ENCODE measurements at regions of chr2 and their contacts with region 1.

Region 1: DNA sequence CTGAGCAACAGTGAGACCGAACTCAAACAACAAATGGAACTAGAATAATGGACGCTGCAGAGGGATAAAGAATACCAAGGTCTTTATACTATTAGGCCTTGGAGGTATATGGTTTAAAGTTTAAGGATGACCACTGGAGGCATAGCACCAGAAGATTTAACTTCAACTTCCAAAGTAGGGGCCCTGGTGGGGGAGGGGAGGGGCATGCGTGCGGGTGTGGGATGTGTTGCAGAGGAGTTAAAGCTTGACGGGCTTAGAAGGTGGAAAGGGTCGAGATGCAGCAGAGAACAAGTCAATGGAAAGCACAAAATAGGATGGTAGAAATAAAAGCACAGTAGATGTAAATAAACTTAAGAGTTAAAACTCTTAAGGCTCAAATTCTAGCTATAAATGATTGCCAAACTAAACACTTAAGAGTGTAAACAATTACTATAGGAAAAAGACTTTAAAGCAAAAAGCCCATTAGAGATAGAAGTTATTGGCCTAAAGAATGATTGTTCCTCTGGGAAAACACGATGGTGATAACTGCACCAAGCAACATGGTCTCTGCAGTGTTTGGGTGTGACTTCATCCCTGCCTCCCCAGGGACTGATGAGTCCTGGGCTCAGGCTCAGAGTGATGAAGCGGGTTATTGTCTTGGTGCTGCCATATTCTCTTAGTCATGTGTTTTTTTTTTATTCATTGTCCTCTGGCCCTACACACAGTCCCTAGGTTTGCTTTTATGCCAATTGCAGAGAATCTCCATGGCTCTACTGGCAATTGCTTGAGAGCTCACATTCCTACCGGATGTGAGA is 13.0 kb downstream of the RRM2 start:
- DNase-seq: no peak
- H3K4me3 ChIP-seq: no peak overlapping the region
- H3K27ac ChIP-seq: no peak overlapping the region
- H3K4me1 ChIP-seq: no peaks in the 10 kb centered on the region
- H3K27me3 ChIP-seq: no peaks in the 10 kb centered on the region
- CTCF ChIP-seq: no peak
- EP300 ChIP-seq: no peak
- POLR2A ChIP-seq: no peak

Region 2: GRCh38 chr2:10239561-10239967 is 104.1 kb after region 1 on chr2:
- in situ Hi-C with region 1: no loop called
- intact Hi-C with region 1: no loop called
- DNase-seq: no peak
- H3K4me3 ChIP-seq: no peak overlapping the region
- H3K27ac ChIP-seq: no peak overlapping the region
- H3K4me1 ChIP-seq: no peaks in the 10 kb centered on the region
- H3K27me3 ChIP-seq: no peaks in the 10 kb centered on the region
- CTCF ChIP-seq: no peak
- EP300 ChIP-seq: no peak
- POLR2A ChIP-seq: no peak

Region 3: GRCh38 chr2:10424051-10424450 is 288.6 kb after region 1 on chr2:
- in situ Hi-C with region 1: loop called in 3 of 4 experiments (anchors 10 to 25 kb)
- intact Hi-C with region 1: no loop called
- DNase-seq: no peak
- H3K4me3 ChIP-seq: no peak overlapping the region
- H3K27ac ChIP-seq: no peak overlapping the region
- H3K4me1 ChIP-seq: peaks cover 0 to 8% (median 5%) of the 10 kb centered on the region in 4 donors
- H3K27me3 ChIP-seq: no peaks in the 10 kb centered on the region
- CTCF ChIP-seq: no peak
- EP300 ChIP-seq: no peak
- POLR2A ChIP-seq: no peak

Region 4: GRCh38 chr2:10434886-10435819 is 299.7 kb after region 1 on chr2:
- in situ Hi-C with region 1: loop called in 1 of 4 experiments (anchors 5 kb)
- intact Hi-C with region 1: no loop called
- DNase-seq: peak; percentile 81
- H3K4me3 ChIP-seq: no peak overlapping the region
- H3K27ac ChIP-seq: no peak overlapping the region
- H3K4me1 ChIP-seq: peaks cover 0 to 23% (median 16%) of the 10 kb centered on the region in 4 donors
- H3K27me3 ChIP-seq: no peaks in the 10 kb centered on the region
- CTCF ChIP-seq: peak; percentile 96 to 98 (median 97)
- EP300 ChIP-seq: no peak
- POLR2A ChIP-seq: no peak

Region 5: GRCh38 chr2:10659898-10660568 is 524.5 kb after region 1 on chr2:
- in situ Hi-C with region 1: loop called in 2 of 4 experiments (anchors 10 to 25 kb)
- intact Hi-C with region 1: no loop called
- DNase-seq: peak; percentile 56
- H3K4me3 ChIP-seq: no peak overlapping the region
- H3K27ac ChIP-seq: no peak overlapping the region
- H3K4me1 ChIP-seq: no peaks in the 10 kb centered on the region
- H3K27me3 ChIP-seq: no peaks in the 10 kb centered on the region
- CTCF ChIP-seq: peak; percentile 55 to 77 (median 66)
- EP300 ChIP-seq: no peak
- POLR2A ChIP-seq: no peak